ENCODE measurements at regions of chr3 and their contacts with region 1.

Region 1: GRCh38 chr3:69691860-69692259 is 47.4 kb upstream of the MITF start:
- H3K4me3 ChIP-seq: no peak overlapping the region
- H3K27ac ChIP-seq: no peak overlapping the region
- H3K4me1 ChIP-seq: no peaks in the 10 kb centered on the region
- CTCF ChIP-seq: no peak

Region 2: DNA sequence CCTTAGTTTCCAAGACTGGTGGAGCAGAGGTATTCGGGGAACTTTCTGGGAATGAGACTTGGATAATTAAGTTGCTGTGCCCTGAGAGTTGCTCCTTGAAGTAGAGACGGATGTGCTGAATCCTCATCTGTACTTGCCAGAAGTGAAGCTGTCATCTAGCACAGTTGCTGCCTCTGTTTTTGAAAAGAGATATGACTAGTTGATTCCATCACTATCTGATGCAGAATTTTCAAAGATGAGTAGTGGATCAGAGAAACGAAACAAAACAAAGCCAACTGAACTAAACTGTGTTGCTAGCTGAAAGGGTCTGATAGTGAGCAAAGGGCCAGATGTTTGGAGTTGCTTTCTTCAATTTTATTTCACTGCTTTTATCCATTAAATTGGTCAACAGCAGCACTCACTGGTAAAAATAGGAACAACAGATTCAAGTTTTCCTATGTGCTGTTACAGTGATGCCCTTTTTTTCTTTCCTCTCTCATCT is 100.1 kb after region 1 on chr3:
- CTCF ChIA-PET with region 1: interaction called, 63 read pairs
- POLR2A ChIA-PET with region 1: no interaction called
- H3K4me3 ChIP-seq: no peak overlapping the region
- H3K27ac ChIP-seq: no peak overlapping the region
- H3K4me1 ChIP-seq: no peaks in the 10 kb centered on the region
- CTCF ChIP-seq: peak; percentile 56; the same call in 1 of the 2 replicates

Region 3: GRCh38 chr3:69948246-69948862 is 256.5 kb after region 1 on chr3:
- CTCF ChIA-PET with region 1: interaction called, 49 read pairs
- POLR2A ChIA-PET with region 1: no interaction called
- H3K4me3 ChIP-seq: no peak overlapping the region
- H3K27ac ChIP-seq: no peak overlapping the region
- H3K4me1 ChIP-seq: no peaks in the 10 kb centered on the region
- CTCF ChIP-seq: no peak

Measured in HEK293 (cell line).